ENCODE measurements at regions of chr16 and their contacts with region 1.

Region 1: GRCh38 chr16:87550496-87550961 is 51.8 kb upstream of the JPH3 start:
- DNase-seq: peak; percentile 25 to 36
- ATAC-seq: peak; percentile 54 to 70; a peak in 4 of 6 replicates
- H3K4me3 ChIP-seq: no peak overlapping the region
- H3K27ac ChIP-seq: no peak overlapping the region
- H3K4me1 ChIP-seq: no peaks in the 10 kb centered on the region
- CTCF ChIP-seq: peak; percentile 84
- EP300 ChIP-seq: no peak
- POLR2A ChIP-seq: no peak
- RAD21 ChIP-seq: peak; percentile 65 to 73

Region 2: GRCh38 chr16:87560428-87561199 is 10.1 kb after region 1 on chr16:
- CTCF ChIA-PET with region 1: interaction called, 17 read pairs
- POLR2A ChIA-PET with region 1: no interaction called
- DNase-seq: peak; percentile 65 to 83
- ATAC-seq: peak; percentile 70 to 93
- H3K4me3 ChIP-seq: no peak overlapping the region
- H3K27ac ChIP-seq: peak overlapping the region in 1 of 2 experiments; percentile 7; a peak in 1 of 6 replicates
- H3K4me1 ChIP-seq: no peaks in the 10 kb centered on the region
- CTCF ChIP-seq: no peak
- EP300 ChIP-seq: no peak
- POLR2A ChIP-seq: no peak
- RAD21 ChIP-seq: no peak

Region 3: GRCh38 chr16:87607223-87607622 is 56.7 kb after region 1 on chr16:
- CTCF ChIA-PET with region 1: no interaction called
- POLR2A ChIA-PET with region 1: no interaction called
- DNase-seq: no peak
- ATAC-seq: no peak
- H3K4me3 ChIP-seq: no peak overlapping the region
- H3K27ac ChIP-seq: no peak overlapping the region
- H3K4me1 ChIP-seq: peaks cover 8% of the 10 kb centered on the region; the same call in 1 of the 3 replicates
- CTCF ChIP-seq: no peak
- EP300 ChIP-seq: no peak
- POLR2A ChIP-seq: no peak
- RAD21 ChIP-seq: no peak

Measured in A549 (cell line).